ENCODE measurements at regions of chr16 and their contacts with region 1.

Region 1: GRCh38 chr16:56608043-56608875 is at the start of gene MT2A:
- DNase-seq: peak; percentile 90 to 94 (median 90)
- H3K4me3 ChIP-seq: peak within 1 kb of the TSS; percentile 76
- H3K27ac ChIP-seq: peak within 1 kb of the TSS; percentile 79 to 81
- H3K4me1 ChIP-seq: peaks cover 27% of the 10 kb centered on the region
- H3K27me3 ChIP-seq: no peaks in the 10 kb centered on the region
- CTCF ChIP-seq: peak in 1 of 3 donors; percentile 10
- EP300 ChIP-seq: peak; percentile 86
- POLR2A ChIP-seq: peak; percentile 90
- total RNA-seq, gene MT2A: 88.0 to 679 (median 136) TPM

Region 2: GRCh38 chr16:56625140-56625942 is 17.1 kb after region 1 on chr16 and contains the start of gene MT1E:
- intact Hi-C with region 1: loop called in 1 of 4 experiments (anchors 2 kb)
- DNase-seq: peak; percentile 48 to 83 (median 68)
- H3K4me3 ChIP-seq: peak within 1 kb of the TSS; percentile 73
- H3K27ac ChIP-seq: peak within 1 kb of the TSS; percentile 65 to 79
- H3K4me1 ChIP-seq: peaks cover 6% of the 10 kb centered on the region
- H3K27me3 ChIP-seq: no peaks in the 10 kb centered on the region
- CTCF ChIP-seq: no peak
- EP300 ChIP-seq: peak; percentile 88
- POLR2A ChIP-seq: peak; percentile 59
- total RNA-seq, gene MT1E: 16.1 to 867 (median 65.3) TPM

Region 3: DNA sequence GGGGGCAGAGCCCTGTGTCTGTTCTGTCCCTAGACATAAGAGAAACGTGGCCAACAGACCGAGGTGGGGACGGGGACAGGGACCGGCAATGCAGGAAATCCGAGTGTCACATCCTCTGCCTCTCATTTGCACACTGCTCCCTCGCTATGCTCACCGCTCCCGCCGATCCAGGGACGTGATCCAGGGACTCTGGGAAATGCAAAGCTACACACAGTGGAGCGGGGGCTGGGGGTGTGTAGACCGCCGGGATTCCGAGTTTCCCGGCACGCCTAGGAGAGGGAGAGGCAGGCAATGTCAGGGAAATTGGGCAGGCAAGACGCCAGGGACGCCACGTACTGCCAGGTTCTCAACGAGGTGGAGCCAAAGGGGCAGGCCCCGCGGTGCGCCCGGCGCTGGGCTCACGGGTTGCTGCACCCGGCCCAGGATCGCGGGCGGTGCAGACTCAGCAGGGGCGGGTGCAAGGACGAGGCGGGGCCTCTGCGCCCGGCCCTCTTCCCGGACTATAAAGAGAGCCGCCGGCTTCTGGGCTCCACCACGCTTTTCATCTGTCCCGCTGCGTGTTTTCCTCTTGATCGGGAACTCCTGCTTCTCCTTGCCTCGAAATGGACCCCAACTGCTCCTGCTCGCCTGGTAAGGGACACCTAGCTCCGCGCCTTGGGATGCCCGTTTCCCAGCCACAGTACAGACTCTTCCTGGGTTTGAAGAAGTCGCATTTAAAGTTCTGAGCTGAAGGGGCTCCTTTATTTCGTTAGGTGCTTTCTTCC is 73.9 kb after region 1 on chr16 and contains the start of gene MT1X:
- intact Hi-C with region 1: loop called in 1 of 4 experiments (anchors 1 kb)
- DNase-seq: peak; percentile 89 to 99 (median 91)
- H3K4me3 ChIP-seq: peak within 1 kb of the TSS; percentile 35
- H3K27ac ChIP-seq: peak within 1 kb of the TSS in 1 of 2 donors; percentile 37
- H3K4me1 ChIP-seq: peaks cover 14% of the 10 kb centered on the region
- H3K27me3 ChIP-seq: no peaks in the 10 kb centered on the region
- CTCF ChIP-seq: no peak
- EP300 ChIP-seq: peak; percentile 97
- POLR2A ChIP-seq: peak; percentile 90
- total RNA-seq, gene MT1X: 30.0 to 1,106 (median 141) TPM

Region 4: DNA sequence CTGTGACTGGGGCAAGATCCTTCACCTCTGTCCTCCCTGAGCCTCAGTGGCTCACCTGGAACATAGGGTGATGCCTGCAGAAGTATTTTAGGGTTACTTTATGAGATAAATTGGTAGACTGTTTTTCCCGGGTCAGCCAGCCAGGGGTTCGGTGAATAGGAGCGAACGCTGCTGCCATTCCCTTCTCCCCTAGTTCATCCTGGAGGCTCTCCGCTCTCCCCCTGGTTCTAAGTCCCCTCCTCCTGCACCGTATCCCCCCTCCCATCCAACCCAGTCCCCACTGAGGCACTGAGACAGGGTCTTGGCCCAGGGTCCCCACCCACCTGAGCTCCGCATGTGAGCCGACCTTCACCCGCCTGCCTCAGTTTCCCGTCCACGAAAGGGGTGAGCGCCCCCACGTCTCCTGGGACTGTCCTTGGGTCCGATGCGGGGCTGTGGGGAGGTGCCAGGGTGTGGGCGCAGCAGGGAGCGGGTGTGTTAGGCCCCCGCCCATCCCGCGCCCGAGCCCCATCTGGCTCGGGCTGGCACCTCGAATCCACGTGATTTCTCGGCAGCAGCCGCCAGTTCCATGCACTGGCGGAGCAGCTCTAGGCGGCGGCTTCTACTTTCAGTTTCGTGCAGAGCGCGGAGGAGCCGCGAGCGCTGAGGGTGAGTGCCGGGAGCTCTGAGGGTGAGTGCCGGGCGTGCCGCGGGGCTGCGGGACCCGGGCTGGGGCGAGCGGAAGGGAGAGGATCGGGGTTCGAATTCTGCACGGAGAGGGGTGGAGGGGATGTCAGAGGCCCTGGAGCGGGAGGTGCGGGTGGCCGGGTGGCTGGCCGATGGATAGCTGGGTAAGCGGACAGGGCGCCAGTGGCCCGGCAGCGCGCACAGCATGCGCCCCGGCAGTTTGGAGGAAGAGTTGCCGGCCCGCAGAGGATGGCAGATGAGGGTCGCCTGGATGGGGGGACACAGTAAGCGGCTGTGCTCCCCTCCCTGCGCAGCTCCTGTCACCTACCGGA is 381.0 kb after region 1 on chr16 and contains the start of gene NLRC5:
- intact Hi-C with region 1: loop called in 1 of 4 experiments (anchors 5 kb)
- DNase-seq: peak; percentile 82 to 86 (median 84)
- H3K4me3 ChIP-seq: peak within 1 kb of the TSS; percentile 65
- H3K27ac ChIP-seq: peak within 1 kb of the TSS; percentile 73 to 86
- H3K4me1 ChIP-seq: peaks cover 17% of the 10 kb centered on the region
- H3K27me3 ChIP-seq: no peaks in the 10 kb centered on the region
- CTCF ChIP-seq: no peak
- EP300 ChIP-seq: peak; percentile 19
- POLR2A ChIP-seq: peak; percentile 54
- total RNA-seq, gene NLRC5: 6.0 to 29.9 (median 14.7) TPM

Measured in ovary (tissue), 10 donors.